Prostate gland (tissue), 2 donors: ENCODE measurements at regions of chr22 and their contacts with region 1.

Region 1: DNA sequence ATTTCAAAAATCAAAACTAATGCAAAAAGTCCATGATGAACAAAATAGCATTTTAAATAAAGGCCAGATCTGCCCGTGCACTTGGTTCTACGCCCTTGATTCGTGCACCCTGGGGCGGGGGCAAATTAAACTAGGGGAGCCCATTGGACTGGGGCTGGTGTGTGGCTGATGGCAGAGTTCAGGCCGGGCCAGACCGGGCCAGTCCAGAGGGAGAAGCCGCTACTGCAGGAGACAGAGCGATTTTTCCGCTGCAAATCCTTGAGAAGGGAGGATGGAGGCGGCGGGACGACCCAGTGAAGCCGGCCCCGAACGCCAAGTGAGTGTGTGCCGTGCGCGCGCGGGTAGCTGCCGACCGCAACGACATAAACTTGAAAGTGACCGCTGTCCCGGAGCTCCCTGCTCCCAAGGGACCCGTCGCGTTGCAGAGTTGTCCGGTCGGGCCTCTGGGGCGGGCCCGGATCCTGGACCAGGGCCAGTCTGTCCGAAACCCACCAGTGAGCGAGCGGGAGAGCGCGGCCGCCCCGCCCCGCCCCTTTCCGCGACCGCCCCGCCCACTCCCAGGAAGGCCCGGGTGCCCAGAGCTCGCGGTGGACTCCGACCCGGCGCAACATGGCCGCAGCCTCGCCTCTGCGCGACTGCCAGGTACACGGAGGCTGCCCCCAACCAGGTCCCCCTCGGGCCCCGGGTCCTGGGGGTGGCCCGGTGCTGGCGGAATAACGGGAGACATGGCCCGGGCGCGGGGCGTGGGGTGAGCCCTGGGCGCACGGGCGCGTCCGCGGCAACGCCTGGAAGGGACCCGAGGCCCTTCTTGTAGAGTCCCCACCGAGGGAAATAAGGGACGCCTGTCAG is at the start of gene TTC38:
- DNase-seq: peak; percentile 92
- H3K4me3 ChIP-seq: peak within 1 kb of the TSS; percentile 52 to 90
- H3K27ac ChIP-seq: peak within 1 kb of the TSS; percentile 74 to 84
- H3K4me1 ChIP-seq: peaks cover 9% of the 10 kb centered on the region
- H3K27me3 ChIP-seq: no peaks in the 10 kb centered on the region
- CTCF ChIP-seq: no peak
- POLR2A ChIP-seq: peak; percentile 67
- total RNA-seq, gene TTC38: 47.6 to 115 TPM

Region 2: GRCh38 chr22:46150034-46150654 is 117.5 kb before region 1 on chr22 and contains the start of gene PPARA:
- intact Hi-C with region 1: loop called (anchors 5 kb)
- DNase-seq: peak; percentile 91
- H3K4me3 ChIP-seq: peak within 1 kb of the TSS; percentile 68 to 94
- H3K27ac ChIP-seq: peak within 1 kb of the TSS; percentile 91 to 93
- H3K4me1 ChIP-seq: no peaks in the 10 kb centered on the region
- H3K27me3 ChIP-seq: no peaks in the 10 kb centered on the region
- CTCF ChIP-seq: peak in 1 of 4 experiments; percentile 15
- POLR2A ChIP-seq: peak; percentile 56
- total RNA-seq, gene PPARA: 21.2 to 27.3 TPM